Endothelial cell of umbilical vein (primary cell): ENCODE measurements at regions of chr17 and their contacts with region 1.

Region 1: DNA sequence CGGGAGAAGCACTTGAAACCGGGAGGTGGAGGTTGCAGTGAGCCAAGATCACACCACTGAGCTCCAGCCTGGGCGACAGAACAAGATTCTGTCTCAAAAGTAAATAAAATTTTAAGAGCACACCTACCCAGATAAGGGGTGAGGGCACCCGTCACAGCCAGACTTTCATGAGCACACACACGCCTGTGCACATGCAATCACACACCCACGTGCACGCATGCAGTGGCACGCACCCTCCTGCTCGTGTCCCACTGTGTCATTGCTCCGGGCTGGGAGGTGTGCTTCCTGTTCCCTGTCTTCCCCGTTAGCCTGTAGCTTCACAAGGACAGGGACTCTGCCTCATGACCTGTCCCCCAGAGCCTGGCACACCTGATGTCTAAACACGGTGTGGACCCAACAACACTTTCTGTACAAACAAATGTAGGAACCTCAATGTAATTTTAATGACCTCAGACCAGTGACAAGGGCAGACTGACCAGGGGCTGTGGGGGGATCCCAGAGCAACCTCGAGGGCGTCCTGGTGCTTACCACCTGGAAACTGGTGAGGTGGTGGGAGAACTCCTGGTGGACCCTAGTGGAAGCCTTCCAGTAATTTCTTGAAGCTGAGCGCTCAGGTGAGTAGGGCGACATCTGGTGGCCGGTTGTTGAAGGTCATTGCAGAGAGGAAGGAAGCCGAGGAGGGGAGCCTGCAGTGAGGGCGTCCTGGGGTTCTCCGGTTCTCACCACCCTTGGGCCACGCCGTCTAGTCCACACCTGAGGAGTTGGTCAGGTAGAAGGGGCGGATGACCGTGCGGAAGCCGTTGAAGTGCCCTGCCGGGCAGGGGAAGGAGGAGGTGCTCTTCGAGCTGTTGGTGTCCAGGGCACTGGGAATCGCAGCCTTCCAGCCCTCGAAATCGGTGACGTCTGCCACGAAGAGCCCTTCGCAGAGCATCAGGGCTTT is 8.6 kb downstream of the LGALS3BP start:
- DNase-seq: peak; percentile 74
- H3K4me3 ChIP-seq: no peak overlapping the region
- H3K27ac ChIP-seq: no peak overlapping the region
- H3K4me1 ChIP-seq: no peaks in the 10 kb centered on the region
- H3K27me3 ChIP-seq: no peaks in the 10 kb centered on the region
- CTCF ChIP-seq: peak; percentile 76 to 83
- POLR2A ChIP-seq: no peak

Region 2: DNA sequence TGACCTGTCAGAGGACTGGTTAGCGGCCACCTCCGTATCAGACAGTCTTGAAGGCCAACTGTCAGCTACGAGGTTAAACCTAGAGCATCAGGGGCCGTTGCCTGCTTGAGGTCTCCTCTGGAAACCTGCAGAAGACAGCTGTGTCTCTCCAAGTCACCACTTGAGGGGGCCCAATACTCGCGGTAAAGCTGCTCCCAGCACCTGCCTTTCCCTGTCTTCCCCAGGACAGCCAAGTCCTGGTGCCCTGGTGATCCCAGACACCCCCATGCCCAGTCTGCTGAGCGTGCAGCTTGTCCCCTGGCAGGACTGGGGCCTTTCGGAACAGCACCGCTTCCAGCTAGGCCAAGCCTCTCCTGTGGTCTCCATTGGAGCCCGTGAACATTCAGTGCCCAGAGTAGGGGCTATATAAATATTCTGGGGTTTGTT is 474.0 kb before region 1 on chr17:
- CTCF ChIA-PET with region 1: interaction called, 5 read pairs
- POLR2A ChIA-PET with region 1: no interaction called
- dilution Hi-C with region 1: no loop called
- intact Hi-C with region 1: loop called (anchors 1 kb)
- DNase-seq: peak; percentile 76
- H3K4me3 ChIP-seq: no peak overlapping the region
- H3K27ac ChIP-seq: no peak overlapping the region
- H3K4me1 ChIP-seq: no peaks in the 10 kb centered on the region
- H3K27me3 ChIP-seq: no peaks in the 10 kb centered on the region
- CTCF ChIP-seq: peak; percentile 63 to 91
- POLR2A ChIP-seq: no peak

Region 3: DNA sequence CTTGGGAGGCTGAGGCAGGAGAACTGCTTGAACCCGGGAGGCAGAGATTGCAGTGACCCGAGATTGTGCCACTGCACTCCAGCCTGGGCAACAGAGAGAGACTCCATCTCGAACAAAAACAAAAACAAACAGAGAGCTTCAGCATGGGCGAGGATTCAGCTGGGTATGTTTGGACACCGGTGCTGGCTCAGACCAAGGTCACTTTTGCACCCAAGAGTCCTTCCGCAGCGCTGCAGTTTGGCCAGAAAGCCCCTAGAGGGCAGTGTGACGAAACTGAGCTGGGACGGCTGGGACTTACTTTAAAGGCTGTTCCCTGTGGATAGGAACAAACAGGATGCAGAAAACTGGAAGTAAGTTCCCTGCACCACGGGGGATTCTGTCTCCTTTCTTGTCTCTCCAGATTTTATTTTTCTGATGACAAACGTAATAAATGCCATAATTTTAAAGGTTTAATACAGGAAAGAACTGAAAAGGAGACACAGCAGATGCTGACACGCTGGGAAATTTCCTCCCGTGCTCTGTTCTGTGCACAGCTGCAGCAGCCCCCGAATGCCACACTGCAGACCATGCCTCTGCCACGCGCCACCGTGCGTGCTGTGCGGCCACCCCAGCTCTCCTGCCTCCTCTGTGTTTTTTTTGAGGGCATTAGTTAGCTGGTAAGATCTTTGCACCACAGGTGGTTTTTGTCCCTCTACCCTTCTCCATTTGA is 105.3 kb before region 1 on chr17:
- CTCF ChIA-PET with region 1: interaction called, 171 read pairs
- POLR2A ChIA-PET with region 1: no interaction called
- dilution Hi-C with region 1: no loop called
- intact Hi-C with region 1: loop called (anchors 1 kb)
- DNase-seq: peak; percentile 89
- H3K4me3 ChIP-seq: no peak overlapping the region
- H3K27ac ChIP-seq: no peak overlapping the region
- H3K4me1 ChIP-seq: peaks cover 22% of the 10 kb centered on the region
- H3K27me3 ChIP-seq: no peaks in the 10 kb centered on the region
- CTCF ChIP-seq: peak; percentile 92 to 93
- POLR2A ChIP-seq: no peak

Region 4: DNA sequence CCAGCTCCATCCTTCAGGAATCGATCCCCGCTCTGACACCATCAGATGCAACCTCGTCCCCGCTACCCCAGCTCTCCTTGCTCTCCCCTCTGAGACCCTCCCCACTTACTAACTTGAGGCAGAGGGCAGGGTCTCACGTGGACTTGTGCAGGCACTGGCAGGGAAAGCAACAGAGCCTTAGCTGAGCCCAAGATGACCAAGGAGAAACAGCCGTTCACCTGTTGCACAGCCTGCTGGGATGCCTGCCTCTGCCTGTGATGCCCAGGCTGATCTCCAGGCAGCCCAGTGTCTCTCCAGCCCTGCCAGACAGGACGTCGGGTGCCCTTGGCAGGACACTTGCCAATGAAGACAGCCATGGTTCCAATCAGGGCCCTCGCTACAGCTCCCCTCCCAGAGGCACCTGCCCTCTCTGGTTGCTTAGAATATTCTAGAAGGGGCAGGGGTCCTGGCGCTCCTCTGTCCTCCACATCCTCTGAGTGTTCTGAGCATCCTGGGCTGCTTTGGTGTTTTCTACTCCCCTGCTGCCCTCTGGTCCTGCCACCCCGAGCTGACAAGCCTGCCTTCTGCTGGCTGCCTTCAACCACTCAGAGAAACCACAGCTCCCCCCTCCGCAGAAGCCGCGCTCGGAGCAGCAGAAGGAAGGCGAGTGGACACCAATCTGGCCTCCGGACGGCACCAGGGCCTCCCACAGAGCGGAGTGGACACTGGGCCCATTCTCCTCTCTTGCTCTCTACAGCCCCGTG is 74.8 kb before region 1 on chr17:
- CTCF ChIA-PET with region 1: interaction called, 12 read pairs
- POLR2A ChIA-PET with region 1: no interaction called
- dilution Hi-C with region 1: no loop called
- intact Hi-C with region 1: no loop called
- DNase-seq: no peak
- H3K4me3 ChIP-seq: no peak overlapping the region
- H3K27ac ChIP-seq: no peak overlapping the region
- H3K4me1 ChIP-seq: no peaks in the 10 kb centered on the region
- H3K27me3 ChIP-seq: no peaks in the 10 kb centered on the region
- CTCF ChIP-seq: no peak
- POLR2A ChIP-seq: no peak

Region 5: DNA sequence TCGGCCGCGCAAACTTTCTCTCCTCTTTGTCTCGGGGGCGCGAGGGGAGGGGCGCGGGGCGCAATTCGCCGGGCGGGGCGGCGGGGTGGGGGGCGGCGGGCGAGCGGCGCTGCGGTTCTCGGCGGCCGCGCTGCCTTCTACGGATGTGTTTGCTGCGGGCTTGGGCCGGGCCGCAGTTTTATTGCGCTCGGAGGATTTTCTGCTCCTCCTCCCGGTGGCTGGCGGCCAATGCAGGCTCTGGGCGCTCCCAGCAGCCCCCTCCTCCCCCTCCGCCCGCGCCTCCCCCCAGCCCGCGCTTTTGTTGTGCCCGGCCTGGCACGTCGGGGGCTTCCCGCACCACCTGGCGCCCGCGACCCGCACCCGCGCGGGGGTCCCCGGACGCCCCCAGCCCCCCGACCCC is 45.9 kb before region 1 on chr17 and contains the start of gene TIMP2:
- CTCF ChIA-PET with region 1: interaction called, 10 read pairs
- POLR2A ChIA-PET with region 1: no interaction called
- dilution Hi-C with region 1: no loop called
- intact Hi-C with region 1: loop called (anchors 1 kb)
- DNase-seq: peak; percentile 86
- H3K4me3 ChIP-seq: peak within 1 kb of the TSS; percentile 54 to 78 (median 59)
- H3K27ac ChIP-seq: peak within 1 kb of the TSS; percentile 64
- H3K4me1 ChIP-seq: peaks cover 13% of the 10 kb centered on the region
- H3K27me3 ChIP-seq: no peaks in the 10 kb centered on the region
- CTCF ChIP-seq: peak in 1 of 2 donors; percentile 20
- POLR2A ChIP-seq: peak; percentile 83
- total RNA-seq, gene TIMP2: 280 and 318 TPM in 2 replicates

Region 6: GRCh38 chr17:78944956-78945355 is 26.1 kb before region 1 on chr17:
- CTCF ChIA-PET with region 1: interaction called, 12 read pairs
- POLR2A ChIA-PET with region 1: no interaction called
- dilution Hi-C with region 1: no loop called
- intact Hi-C with region 1: no loop called
- DNase-seq: no peak
- H3K4me3 ChIP-seq: no peak overlapping the region
- H3K27ac ChIP-seq: no peak overlapping the region
- H3K4me1 ChIP-seq: no peaks in the 10 kb centered on the region
- H3K27me3 ChIP-seq: no peaks in the 10 kb centered on the region
- CTCF ChIP-seq: no peak
- POLR2A ChIP-seq: no peak